Activated CD8-positive, alpha-beta memory T cell treated with anti-CD3 and anti-CD28 coated beads, Interleukin-2, amount 10 ng/mL, durations not matched to agents 7 days and 5 days (primary cell): ENCODE measurements at regions of chr16 and their contacts with region 1.

Region 1: GRCh38 chr16:12095275-12096156 is 119.0 kb downstream of the SNX29 start:
- DNase-seq: peak; percentile 65
- ATAC-seq: peak; percentile 58
- H3K4me3 Mint-ChIP-seq: peak overlapping the region; percentile 32
- H3K27ac Mint-ChIP-seq: no peak overlapping the region
- H3K4me1 Mint-ChIP-seq: peaks cover 4% of the 10 kb centered on the region
- H3K27me3 Mint-ChIP-seq: no peaks in the 10 kb centered on the region

Region 2: DNA sequence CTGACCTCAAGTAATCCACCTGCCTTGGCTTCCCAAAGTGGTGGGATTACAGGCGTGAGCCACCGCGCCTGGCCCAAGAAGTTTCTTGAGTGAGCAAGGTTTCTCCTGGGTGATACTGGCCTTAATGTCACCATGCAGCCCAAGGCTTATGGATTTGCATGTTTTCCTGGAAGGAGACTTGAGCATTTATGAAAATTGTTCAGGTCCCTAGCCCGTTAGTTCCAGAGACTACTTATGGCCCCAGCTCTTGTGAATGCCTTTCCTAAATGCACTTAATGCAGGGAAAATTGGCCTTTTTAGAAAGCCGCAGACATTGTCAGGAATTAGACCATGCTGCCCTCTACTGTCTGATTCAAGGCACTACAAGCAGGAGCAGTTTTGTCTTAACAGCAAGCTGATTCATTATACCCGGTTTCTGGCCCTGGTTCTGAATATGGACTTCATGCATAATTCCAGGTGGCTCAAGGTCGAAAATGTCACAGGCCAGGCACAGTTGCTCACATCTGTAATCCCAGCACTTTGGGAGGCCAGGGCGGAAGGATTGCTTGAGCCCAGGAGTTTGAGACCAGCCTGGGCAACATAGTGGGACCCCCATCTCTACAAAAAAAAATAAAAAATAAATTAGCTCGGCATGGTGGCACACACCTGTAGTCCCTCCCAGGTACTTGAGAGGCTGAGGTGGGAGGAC is 27.7 kb before region 1 on chr16:
- CTCF ChIA-PET with region 1: interaction called, 20 read pairs
- DNase-seq: peak; percentile 71
- ATAC-seq: peak; percentile 74
- H3K4me3 Mint-ChIP-seq: no peak overlapping the region
- H3K27ac Mint-ChIP-seq: no peak overlapping the region
- H3K4me1 Mint-ChIP-seq: no peaks in the 10 kb centered on the region
- H3K27me3 Mint-ChIP-seq: no peaks in the 10 kb centered on the region

Region 3: DNA sequence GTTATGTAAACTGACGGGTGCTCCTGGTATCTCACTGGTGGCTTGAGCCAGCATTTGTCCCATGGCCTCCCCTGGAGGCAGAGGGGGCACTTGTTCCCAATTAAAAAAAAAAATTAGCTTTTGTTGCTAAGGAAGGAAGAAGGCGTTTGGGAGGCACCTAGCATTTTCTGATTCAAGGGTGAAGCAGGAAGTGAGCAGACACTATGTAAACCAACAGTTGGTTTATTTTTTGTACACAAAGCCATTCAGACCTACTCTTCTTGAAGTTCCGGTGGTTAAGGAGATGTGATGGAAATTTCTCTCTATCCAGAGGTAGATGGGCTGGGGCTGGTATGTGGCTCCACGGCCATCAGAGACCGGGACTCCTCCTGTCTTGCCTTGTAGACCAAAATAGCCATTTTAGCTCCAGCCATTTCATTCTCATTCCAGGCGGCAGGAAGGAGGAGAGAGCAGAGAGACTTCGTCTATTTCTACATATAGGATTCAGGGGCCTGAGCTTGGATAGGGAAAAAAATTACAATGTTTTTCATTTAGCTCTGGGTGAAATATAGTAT is 16.0 kb before region 1 on chr16:
- CTCF ChIA-PET with region 1: interaction called, 42 read pairs
- DNase-seq: no peak
- ATAC-seq: peak; percentile 38
- H3K4me3 Mint-ChIP-seq: peak overlapping the region; percentile 38
- H3K27ac Mint-ChIP-seq: peak overlapping the region; percentile 91
- H3K4me1 Mint-ChIP-seq: peaks cover 57% of the 10 kb centered on the region
- H3K27me3 Mint-ChIP-seq: no peaks in the 10 kb centered on the region

Region 4: DNA sequence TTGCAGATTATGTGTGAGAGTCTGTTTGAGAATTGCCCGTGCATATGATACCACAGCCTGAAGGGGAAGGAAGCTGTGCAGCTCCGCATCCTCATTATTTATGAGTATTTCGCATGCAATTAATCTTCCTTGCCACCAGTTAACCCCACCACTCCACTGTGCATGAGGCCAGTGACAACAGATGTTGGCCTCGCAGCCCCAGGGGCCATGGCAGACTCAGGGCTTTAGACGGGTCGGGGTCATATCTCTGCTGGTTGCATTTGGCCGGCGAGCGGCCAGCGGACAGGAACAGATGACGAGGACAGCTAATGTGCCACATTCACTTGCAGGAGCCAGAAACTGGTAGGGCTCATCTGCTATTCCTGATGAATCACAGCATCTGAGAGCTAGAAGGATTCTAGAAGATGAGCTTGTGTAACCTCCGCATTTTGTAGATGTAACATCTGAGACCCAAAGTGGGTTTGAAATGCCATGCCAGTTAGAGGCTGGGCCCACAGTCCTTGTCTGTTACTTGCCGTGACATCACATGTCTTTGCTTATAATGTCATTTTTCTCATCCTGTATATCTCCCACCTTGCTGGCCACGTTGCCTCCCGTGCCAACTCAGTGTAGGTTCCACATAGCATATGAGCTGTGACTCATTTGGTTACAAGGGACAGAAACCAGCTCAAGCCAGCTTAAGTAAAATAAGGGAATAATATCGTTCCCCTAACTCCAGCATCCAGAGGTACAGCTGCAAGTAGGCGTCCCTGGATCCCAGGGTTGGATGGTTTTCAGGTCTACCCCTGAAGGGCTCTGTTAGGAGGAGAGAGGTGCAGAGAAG is 18.2 kb after region 1 on chr16:
- CTCF ChIA-PET with region 1: interaction called, 13 read pairs
- DNase-seq: no peak
- ATAC-seq: no peak
- H3K4me3 Mint-ChIP-seq: no peak overlapping the region
- H3K27ac Mint-ChIP-seq: no peak overlapping the region
- H3K4me1 Mint-ChIP-seq: no peaks in the 10 kb centered on the region
- H3K27me3 Mint-ChIP-seq: no peaks in the 10 kb centered on the region

Region 5: DNA sequence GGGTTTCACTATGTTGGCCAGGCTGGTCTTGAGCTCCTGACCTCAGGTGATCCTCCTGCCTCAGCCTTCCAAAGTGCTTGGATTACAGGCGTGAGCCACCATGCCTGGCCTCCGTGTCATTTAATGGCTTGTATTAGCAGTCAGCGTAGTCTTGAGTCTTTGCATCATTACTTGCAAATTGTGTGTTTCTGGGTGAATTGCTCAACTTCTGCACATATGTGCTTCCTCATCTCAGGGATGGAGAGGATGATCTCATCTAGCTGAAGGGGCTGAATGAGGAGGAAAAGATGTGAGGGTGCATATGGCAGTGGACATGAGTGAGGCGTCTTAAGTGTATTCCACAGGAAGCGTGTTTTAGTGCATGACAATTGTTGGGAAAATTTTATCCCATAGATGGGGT is 36.8 kb after region 1 on chr16:
- CTCF ChIA-PET with region 1: no interaction called
- DNase-seq: no peak
- ATAC-seq: no peak
- H3K4me3 Mint-ChIP-seq: no peak overlapping the region
- H3K27ac Mint-ChIP-seq: no peak overlapping the region
- H3K4me1 Mint-ChIP-seq: no peaks in the 10 kb centered on the region
- H3K27me3 Mint-ChIP-seq: no peaks in the 10 kb centered on the region

Region 6: GRCh38 chr16:12240036-12240435 is 144.5 kb after region 1 on chr16:
- CTCF ChIA-PET with region 1: no interaction called
- DNase-seq: no peak
- ATAC-seq: no peak
- H3K4me3 Mint-ChIP-seq: no peak overlapping the region
- H3K27ac Mint-ChIP-seq: no peak overlapping the region
- H3K4me1 Mint-ChIP-seq: no peaks in the 10 kb centered on the region
- H3K27me3 Mint-ChIP-seq: no peaks in the 10 kb centered on the region

Region 7: GRCh38 chr16:12455287-12455798 is 359.8 kb after region 1 on chr16:
- CTCF ChIA-PET with region 1: no interaction called
- DNase-seq: peak; percentile 58
- ATAC-seq: peak; percentile 74
- H3K4me3 Mint-ChIP-seq: no peak overlapping the region
- H3K27ac Mint-ChIP-seq: no peak overlapping the region
- H3K4me1 Mint-ChIP-seq: peaks cover 13% of the 10 kb centered on the region
- H3K27me3 Mint-ChIP-seq: no peaks in the 10 kb centered on the region

Region 8: DNA sequence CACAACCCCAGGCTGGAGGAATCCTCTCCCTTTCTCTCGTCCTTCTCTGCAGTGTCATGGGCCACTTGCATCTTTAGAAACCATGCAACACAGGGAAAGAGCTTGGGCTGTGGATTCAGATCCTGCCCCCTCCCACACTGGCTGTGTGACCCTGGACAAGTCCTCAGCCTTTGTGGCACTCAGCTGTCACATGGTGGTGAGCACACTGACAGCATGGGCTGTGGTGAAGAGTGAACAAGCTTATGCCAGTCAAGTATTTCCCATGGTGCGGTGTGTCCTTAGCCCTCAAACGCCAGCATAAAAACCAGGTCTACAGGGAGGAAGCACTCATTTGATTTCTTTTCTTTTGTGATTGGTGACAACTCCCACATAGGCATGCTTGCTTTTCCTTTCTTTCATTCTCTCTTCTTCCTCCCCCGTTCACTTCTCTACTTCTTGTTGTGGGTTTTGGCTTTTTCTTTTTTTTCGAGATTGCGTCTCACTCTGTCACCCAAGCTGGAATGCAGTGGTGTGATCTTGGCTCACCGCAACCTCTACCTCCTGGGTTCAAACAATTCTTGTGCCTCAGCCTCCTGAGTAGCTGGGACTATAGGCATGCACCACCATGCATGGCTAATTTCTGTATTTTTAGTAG is 394.0 kb after region 1 on chr16:
- CTCF ChIA-PET with region 1: no interaction called
- DNase-seq: no peak
- ATAC-seq: no peak
- H3K4me3 Mint-ChIP-seq: no peak overlapping the region
- H3K27ac Mint-ChIP-seq: no peak overlapping the region
- H3K4me1 Mint-ChIP-seq: peaks cover 2% of the 10 kb centered on the region
- H3K27me3 Mint-ChIP-seq: no peaks in the 10 kb centered on the region